Astrocyte of the cerebellum (primary cell): ENCODE measurements at regions of chr15 and their contacts with region 1.

Region 1: DNA sequence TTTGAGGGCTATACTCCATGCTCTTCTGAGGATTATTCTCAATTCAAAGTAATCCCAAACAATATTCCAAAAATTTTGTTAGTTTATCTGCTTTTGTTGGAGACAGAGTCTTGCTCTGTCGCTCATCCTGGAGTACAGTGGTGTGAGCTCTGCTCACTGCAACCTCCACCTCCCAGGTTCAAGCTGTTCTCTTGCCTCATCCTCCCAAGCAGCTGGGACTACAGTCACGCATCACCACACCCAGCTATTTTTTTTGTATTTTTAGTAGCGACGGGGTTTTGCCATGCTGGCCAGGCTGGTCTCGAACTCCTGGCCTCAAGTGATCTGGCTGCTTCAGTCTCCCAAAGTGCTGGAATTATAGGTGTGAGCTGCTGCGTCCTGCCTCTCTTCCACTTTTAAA is 39.1 kb downstream of the MEF2A start:
- DNase-seq: no peak
- H3K4me3 ChIP-seq: no peak overlapping the region
- CTCF ChIP-seq: no peak

Region 2: GRCh38 chr15:99296386-99296785 is 308.5 kb before region 1 on chr15:
- in situ Hi-C with region 1: no loop called
- DNase-seq: no peak
- H3K4me3 ChIP-seq: no peak overlapping the region
- CTCF ChIP-seq: no peak

Region 3: DNA sequence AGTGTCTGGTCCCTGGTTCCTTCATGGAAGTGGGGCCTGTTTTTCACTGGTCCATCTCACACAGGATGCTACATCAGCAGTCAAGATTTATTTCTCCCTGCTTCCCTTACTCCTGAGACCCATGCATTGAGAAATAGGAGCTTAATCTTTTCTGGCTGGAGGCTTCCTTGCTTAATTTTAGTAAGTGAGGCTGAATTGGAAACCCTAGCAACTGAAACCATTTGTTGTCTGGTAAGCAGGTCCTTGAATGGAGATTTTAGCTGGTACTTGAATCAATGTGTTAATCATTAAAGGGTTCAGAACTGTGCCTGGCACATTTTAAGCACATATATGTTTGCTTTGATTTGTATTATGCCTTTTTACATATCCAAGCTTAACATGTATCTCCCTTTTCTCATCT is 59.3 kb before region 1 on chr15:
- in situ Hi-C with region 1: loop called (anchors 5 kb)
- DNase-seq: no peak
- H3K4me3 ChIP-seq: no peak overlapping the region
- CTCF ChIP-seq: no peak